HCT116 (cell line): ENCODE measurements at regions of chr22 and their contacts with region 1.

Region 1: GRCh38 chr22:30212363-30212995 is 34.1 kb downstream of the LIF start:
- DNase-seq: peak; percentile 93
- ATAC-seq: peak; percentile 63
- H3K4me3 ChIP-seq: peak overlapping the region in 1 of 2 experiments; percentile 29; a peak in 2 of 4 replicates
- H3K27ac ChIP-seq: peak overlapping the region; percentile 96
- H3K4me1 ChIP-seq: peaks cover 66 to 92% of the 10 kb centered on the region in 2 experiments
- H3K27me3 ChIP-seq: no peaks in the 10 kb centered on the region
- CTCF ChIP-seq: 0 out of 6 replicates have a peak, but pooled peaks of 1 of the 3 experiments have one; percentile 19
- POLR2A ChIP-seq: no peak
- RAD21 ChIP-seq: no peak

Region 2: GRCh38 chr22:30196141-30196879 is 16.2 kb before region 1 on chr22:
- CTCF ChIA-PET with region 1: no interaction called
- POLR2A ChIA-PET with region 1: interaction called, 20 read pairs
- RAD21 ChIA-PET with region 1: no interaction called
- intact Hi-C with region 1: no loop called
- DNase-seq: peak; percentile 91
- ATAC-seq: peak; percentile 91
- H3K4me3 ChIP-seq: peak overlapping the region; percentile 8 to 26
- H3K27ac ChIP-seq: peak overlapping the region; percentile 66
- H3K4me1 ChIP-seq: peaks cover 25 to 59% of the 10 kb centered on the region in 2 experiments
- H3K27me3 ChIP-seq: no peaks in the 10 kb centered on the region
- CTCF ChIP-seq: no peak
- POLR2A ChIP-seq: no peak
- RAD21 ChIP-seq: no peak; the same call in 1 of the 2 replicates

Region 3: GRCh38 chr22:30224161-30224857 is 11.8 kb after region 1 on chr22:
- CTCF ChIA-PET with region 1: no interaction called
- POLR2A ChIA-PET with region 1: interaction called, 43 read pairs
- RAD21 ChIA-PET with region 1: interaction called in 1 of 2 experiments, 3 read pairs
- intact Hi-C with region 1: no loop called
- DNase-seq: peak; percentile 89
- ATAC-seq: peak; percentile 71
- H3K4me3 ChIP-seq: peak overlapping the region in 1 of 2 experiments; percentile 25; a peak in 1 of 4 replicates
- H3K27ac ChIP-seq: peak overlapping the region; percentile 92
- H3K4me1 ChIP-seq: peaks cover 49 to 90% of the 10 kb centered on the region in 2 experiments
- H3K27me3 ChIP-seq: no peaks in the 10 kb centered on the region
- CTCF ChIP-seq: peak in 2 of 3 experiments; percentile 15 to 20; a peak in 2 of 6 replicates
- POLR2A ChIP-seq: no peak
- RAD21 ChIP-seq: no peak; the same call in 1 of the 2 replicates

Region 4: GRCh38 chr22:30538280-30538679 is 325.8 kb after region 1 on chr22:
- CTCF ChIA-PET with region 1: no interaction called
- POLR2A ChIA-PET with region 1: no interaction called
- RAD21 ChIA-PET with region 1: no interaction called
- intact Hi-C with region 1: no loop called
- DNase-seq: no peak
- ATAC-seq: no peak
- H3K4me3 ChIP-seq: no peak overlapping the region
- H3K27ac ChIP-seq: no peak overlapping the region
- H3K4me1 ChIP-seq: no peaks in the 10 kb centered on the region
- H3K27me3 ChIP-seq: no peaks in the 10 kb centered on the region
- CTCF ChIP-seq: no peak
- POLR2A ChIP-seq: no peak
- RAD21 ChIP-seq: no peak